Activated CD8-positive, alpha-beta T cell treated with anti-CD3 and anti-CD28 coated beads for 36 hours (primary cell): ENCODE measurements at regions of chr12 and their contacts with region 1.

Region 1: GRCh38 chr12:93979189-93979588 is 169.2 kb upstream of the PLXNC1 start:
- DNase-seq: peak; percentile 44
- ATAC-seq: no peak
- H3K4me3 Mint-ChIP-seq: no peak overlapping the region
- H3K27ac Mint-ChIP-seq: no peak overlapping the region
- H3K4me1 Mint-ChIP-seq: peaks cover 20% of the 10 kb centered on the region
- H3K27me3 Mint-ChIP-seq: peaks cover 2% of the 10 kb centered on the region
- CTCF ChIP-seq: peak; percentile 35

Region 2: GRCh38 chr12:93751864-93752610 is 227.2 kb before region 1 on chr12:
- CTCF ChIA-PET with region 1: no interaction called
- POLR2A ChIA-PET with region 1: no interaction called
- intact Hi-C with region 1: no loop called
- DNase-seq: no peak
- ATAC-seq: no peak
- H3K4me3 Mint-ChIP-seq: no peak overlapping the region
- H3K27ac Mint-ChIP-seq: no peak overlapping the region
- H3K4me1 Mint-ChIP-seq: peaks cover 3% of the 10 kb centered on the region
- H3K27me3 Mint-ChIP-seq: no peaks in the 10 kb centered on the region
- CTCF ChIP-seq: no peak

Region 3: GRCh38 chr12:93766796-93767523 is 212.2 kb before region 1 on chr12:
- CTCF ChIA-PET with region 1: interaction called, 40 read pairs
- POLR2A ChIA-PET with region 1: no interaction called
- intact Hi-C with region 1: loop called (anchors 5 kb)
- DNase-seq: peak; percentile 55
- ATAC-seq: peak; percentile 80
- H3K4me3 Mint-ChIP-seq: no peak overlapping the region
- H3K27ac Mint-ChIP-seq: no peak overlapping the region
- H3K4me1 Mint-ChIP-seq: peaks cover 38% of the 10 kb centered on the region
- H3K27me3 Mint-ChIP-seq: no peaks in the 10 kb centered on the region
- CTCF ChIP-seq: peak; percentile 55

Region 4: DNA sequence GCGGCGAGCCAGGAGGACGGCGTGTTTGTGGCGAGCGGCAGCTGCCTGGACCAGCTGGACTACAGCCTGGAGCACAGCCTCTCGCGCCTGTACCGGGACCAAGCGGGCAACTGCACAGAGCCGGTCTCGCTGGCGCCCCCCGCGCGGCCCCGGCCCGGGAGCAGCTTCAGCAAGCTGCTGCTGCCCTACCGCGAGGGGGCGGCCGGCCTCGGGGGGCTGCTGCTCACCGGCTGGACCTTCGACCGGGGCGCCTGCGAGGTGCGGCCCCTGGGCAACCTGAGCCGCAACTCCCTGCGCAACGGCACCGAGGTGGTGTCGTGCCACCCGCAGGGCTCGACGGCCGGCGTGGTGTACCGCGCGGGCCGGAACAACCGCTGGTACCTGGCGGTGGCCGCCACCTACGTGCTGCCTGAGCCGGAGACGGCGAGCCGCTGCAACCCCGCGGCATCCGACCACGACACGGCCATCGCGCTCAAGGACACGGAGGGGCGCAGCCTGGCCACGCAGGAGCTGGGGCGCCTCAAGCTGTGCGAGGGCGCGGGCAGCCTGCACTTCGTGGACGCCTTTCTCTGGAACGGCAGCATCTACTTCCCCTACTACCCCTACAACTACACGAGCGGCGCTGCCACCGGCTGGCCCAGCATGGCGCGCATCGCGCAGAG is 170.1 kb after region 1 on chr12:
- CTCF ChIA-PET with region 1: no interaction called
- POLR2A ChIA-PET with region 1: no interaction called
- intact Hi-C with region 1: no loop called
- DNase-seq: peak; percentile 58
- ATAC-seq: peak; percentile 22
- H3K4me3 Mint-ChIP-seq: peak overlapping the region; percentile 87
- H3K27ac Mint-ChIP-seq: no peak overlapping the region
- H3K4me1 Mint-ChIP-seq: peaks cover 24% of the 10 kb centered on the region
- H3K27me3 Mint-ChIP-seq: peaks cover 24% of the 10 kb centered on the region
- CTCF ChIP-seq: peak; percentile 70